AG04449 (cell line): ENCODE measurements at regions of chr20 and their contacts with region 1.

Region 1: GRCh38 chr20:5222919-5223634 is 93.7 kb downstream of the PROKR2 start:
- DNase-seq: peak; percentile 4
- H3K4me3 ChIP-seq: no peak overlapping the region
- CTCF ChIP-seq: peak; percentile 88

Region 2: DNA sequence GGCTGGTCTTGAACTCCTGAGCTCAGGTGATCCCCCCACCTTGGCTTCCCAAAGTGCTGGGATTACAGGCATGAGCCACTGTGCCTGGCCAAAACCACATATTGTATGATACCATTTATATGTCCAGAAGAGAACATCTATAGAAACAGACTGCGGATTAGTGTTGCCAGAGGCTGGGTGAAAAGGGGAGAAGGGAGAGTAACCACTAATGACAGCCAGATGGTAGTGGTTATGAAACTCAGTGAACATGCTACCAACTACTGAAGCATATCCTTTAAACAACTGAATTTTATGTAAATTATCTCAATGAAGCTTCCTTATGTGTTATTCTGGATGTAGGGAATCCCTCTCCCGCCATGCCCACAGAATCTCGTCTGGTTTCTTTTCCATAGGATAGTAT is 237.4 kb before region 1 on chr20:
- CTCF ChIA-PET with region 1: no interaction called
- POLR2A ChIA-PET with region 1: no interaction called
- DNase-seq: no peak
- H3K4me3 ChIP-seq: no peak overlapping the region
- CTCF ChIP-seq: no peak

Region 3: DNA sequence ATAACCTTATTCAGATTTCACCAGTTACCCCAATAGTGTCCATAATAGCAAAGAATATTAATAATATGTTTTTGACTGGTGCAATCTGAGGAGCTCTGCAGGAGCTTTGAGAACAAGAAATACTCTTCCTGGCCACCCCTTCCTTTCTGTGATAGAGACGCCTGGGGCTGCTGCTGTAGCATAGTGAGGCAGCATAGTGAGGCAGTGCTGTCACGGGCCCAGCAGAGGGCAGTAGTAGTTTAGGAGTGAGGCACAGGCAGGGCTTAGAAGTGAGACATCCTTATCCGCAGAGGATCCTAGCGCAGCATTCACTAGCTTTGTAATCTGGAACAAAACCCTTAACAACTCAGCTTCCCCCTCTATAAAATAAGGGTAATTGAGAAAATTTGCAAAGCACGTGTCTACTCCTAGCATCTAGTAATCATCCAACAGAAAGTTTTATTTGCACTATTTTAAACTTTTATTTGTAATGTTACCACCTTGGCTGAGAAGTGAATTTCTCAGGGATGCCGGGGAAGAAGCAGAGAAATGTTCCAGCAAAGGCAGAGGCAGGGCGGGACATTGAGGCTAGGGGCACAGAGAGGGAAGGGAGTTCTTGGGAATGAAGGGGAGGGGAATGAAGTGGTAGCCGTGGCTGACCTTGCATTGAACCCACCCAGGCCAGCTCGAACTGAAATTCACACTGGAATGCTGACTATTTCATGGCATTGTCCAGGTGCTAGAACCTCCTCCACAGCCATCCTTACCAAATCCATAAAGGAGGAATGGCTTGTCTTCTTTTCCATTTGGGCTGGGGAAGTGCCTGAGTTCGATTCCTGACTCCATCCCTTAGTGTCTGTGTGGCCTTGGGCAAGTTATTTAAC is 17.5 kb before region 1 on chr20:
- CTCF ChIA-PET with region 1: interaction called, 407 read pairs
- POLR2A ChIA-PET with region 1: no interaction called
- DNase-seq: no peak
- H3K4me3 ChIP-seq: no peak overlapping the region
- CTCF ChIP-seq: peak; percentile 95

Region 4: GRCh38 chr20:5234158-5234557 is 11.1 kb after region 1 on chr20:
- CTCF ChIA-PET with region 1: interaction called, 11 read pairs
- POLR2A ChIA-PET with region 1: no interaction called
- DNase-seq: no peak
- H3K4me3 ChIP-seq: no peak overlapping the region
- CTCF ChIP-seq: no peak